Activated CD4-positive, alpha-beta T cell treated with anti-CD3 and anti-CD28 coated beads, Interleukin-2, amount 10 ng/mL, durations not matched to agents 24 days and 14 days (primary cell): ENCODE measurements at regions of chr6 and their contacts with region 1.

Region 1: GRCh38 chr6:125779924-125780539 is 10.7 kb upstream of the NCOA7 start:
- DNase-seq: peak; percentile 95
- H3K4me3 Mint-ChIP-seq: no peak overlapping the region
- H3K27ac Mint-ChIP-seq: no peak overlapping the region
- H3K4me1 Mint-ChIP-seq: peaks cover 10% of the 10 kb centered on the region
- H3K27me3 Mint-ChIP-seq: peaks cover 25% of the 10 kb centered on the region

Region 2: GRCh38 chr6:125749173-125749864 is 30.7 kb before region 1 on chr6 and contains the start of gene HEY2:
- intact Hi-C with region 1: loop called (anchors 2 kb)
- DNase-seq: peak; percentile 96
- H3K4me3 Mint-ChIP-seq: peak within 1 kb of the TSS; percentile 85
- H3K27ac Mint-ChIP-seq: peak within 1 kb of the TSS; percentile 42
- H3K4me1 Mint-ChIP-seq: peaks cover 33% of the 10 kb centered on the region
- H3K27me3 Mint-ChIP-seq: peaks cover 77% of the 10 kb centered on the region
- total RNA-seq, gene HEY2: not detected in 2 replicates

Region 3: DNA sequence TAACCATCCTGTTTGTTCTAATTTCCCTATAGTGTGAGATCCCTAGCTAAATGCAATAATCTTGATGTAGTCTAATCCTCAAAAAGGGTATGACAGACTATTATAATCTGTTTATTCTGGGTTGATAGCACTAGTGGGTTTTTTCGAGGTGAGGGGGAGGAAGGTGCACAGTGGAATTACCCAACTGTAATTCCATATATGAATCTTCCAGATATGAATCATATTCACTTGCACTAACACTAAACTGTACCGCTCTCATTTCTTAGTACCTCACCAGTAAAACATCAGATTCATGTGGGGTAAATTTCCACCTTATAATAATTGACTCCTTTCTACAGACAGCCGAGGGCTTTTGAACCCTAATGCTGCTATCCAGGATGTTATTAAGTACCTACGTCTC is 27.3 kb after region 1 on chr6:
- intact Hi-C with region 1: loop called (anchors 1 kb)
- DNase-seq: peak; percentile 50
- H3K4me3 Mint-ChIP-seq: peak overlapping the region; percentile 46
- H3K27ac Mint-ChIP-seq: peak overlapping the region; percentile 79
- H3K4me1 Mint-ChIP-seq: peaks cover 63% of the 10 kb centered on the region
- H3K27me3 Mint-ChIP-seq: no peaks in the 10 kb centered on the region

Region 4: DNA sequence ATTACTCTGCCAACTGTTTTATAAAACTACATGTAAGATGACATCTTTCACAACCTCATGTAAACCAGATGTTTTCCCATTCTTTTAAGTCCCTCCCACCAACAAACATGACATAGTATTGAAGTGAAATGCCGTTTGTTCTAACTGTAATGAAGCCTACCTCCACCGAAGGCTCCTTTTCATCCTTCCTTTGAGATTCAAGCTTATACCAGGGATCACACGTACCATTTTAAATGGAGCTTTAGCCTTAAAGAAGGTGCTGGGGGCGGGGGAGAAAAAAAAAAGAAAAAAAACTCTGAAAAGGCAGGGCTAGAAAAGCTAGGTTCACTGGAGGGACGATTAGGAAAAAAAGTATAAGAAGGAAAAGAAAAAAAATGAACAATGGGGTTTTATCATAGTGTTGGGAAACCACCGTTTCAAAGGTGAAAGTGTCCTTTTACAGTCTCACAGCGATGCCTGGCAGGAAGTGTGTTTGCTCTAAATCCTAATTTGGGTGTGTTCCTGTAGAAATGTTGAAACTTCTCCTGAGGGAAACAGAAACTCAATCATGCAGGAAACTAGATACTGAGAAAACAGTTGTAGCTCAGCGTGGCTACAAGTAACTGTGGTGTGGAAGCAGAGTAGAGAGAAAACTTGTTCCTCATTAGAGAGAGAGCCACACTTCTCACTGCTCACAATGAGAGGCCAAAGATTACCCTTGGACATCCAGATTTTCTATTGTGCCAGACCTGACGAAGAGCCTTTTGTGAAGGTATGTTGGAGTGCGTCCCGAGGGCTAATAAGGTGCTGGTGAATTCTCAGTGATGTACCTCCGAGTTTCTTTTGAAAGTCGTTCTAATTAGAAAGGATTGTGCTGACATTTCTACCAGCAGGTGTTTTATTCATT is 138.9 kb after region 1 on chr6:
- intact Hi-C with region 1: loop called (anchors 1 kb)
- DNase-seq: peak; percentile 89
- H3K4me3 Mint-ChIP-seq: peak overlapping the region; percentile 88
- H3K27ac Mint-ChIP-seq: peak overlapping the region; percentile 94
- H3K4me1 Mint-ChIP-seq: peaks cover 51% of the 10 kb centered on the region
- H3K27me3 Mint-ChIP-seq: no peaks in the 10 kb centered on the region

Region 5: GRCh38 chr6:125974214-125974866 is 194.3 kb after region 1 on chr6:
- intact Hi-C with region 1: loop called (anchors 1 kb)
- DNase-seq: no peak
- H3K4me3 Mint-ChIP-seq: no peak overlapping the region
- H3K27ac Mint-ChIP-seq: no peak overlapping the region
- H3K4me1 Mint-ChIP-seq: peaks cover 3% of the 10 kb centered on the region
- H3K27me3 Mint-ChIP-seq: no peaks in the 10 kb centered on the region

Region 6: DNA sequence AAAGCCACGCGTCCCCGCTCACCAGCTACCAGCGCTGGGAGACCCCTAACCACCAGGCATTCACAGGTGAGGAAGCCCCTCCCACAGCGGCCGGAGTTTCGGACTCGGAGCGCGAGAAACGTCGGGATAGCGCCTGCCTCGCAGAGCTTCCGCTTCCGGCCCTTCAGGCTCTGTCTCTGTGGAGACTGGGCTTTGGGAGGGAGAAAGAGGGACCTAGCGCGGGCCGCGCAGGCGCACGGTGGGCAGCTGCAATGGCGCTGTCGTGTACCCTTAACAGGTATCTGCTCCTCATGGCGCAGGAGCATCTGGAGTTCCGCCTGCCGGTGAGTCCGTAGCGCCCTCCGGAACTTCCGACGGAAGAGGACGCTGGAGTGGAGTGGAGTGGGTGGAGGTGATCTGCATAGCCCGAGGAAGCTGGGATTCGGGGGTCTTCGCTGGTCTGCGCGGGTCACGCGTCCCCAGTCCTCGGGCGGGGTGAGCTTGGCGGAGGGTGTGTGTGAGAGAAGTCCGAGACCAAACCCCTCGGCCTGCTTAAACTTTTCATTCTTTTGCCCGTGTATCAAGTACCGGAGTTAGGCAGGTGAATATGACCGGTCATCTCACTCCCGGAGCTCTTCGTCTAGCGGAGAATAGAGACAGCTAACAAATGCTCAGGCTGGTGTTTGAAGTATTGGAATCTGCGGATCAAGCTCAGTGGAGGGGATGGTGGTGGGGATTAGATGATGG is 206.4 kb after region 1 on chr6 and contains the start of gene TRMT11:
- intact Hi-C with region 1: loop called (anchors 1 kb)
- DNase-seq: peak; percentile 93
- H3K4me3 Mint-ChIP-seq: peak within 1 kb of the TSS; percentile 8
- H3K27ac Mint-ChIP-seq: no peak within 1 kb of the TSS
- H3K4me1 Mint-ChIP-seq: peaks cover 7% of the 10 kb centered on the region
- H3K27me3 Mint-ChIP-seq: no peaks in the 10 kb centered on the region
- total RNA-seq, gene TRMT11: 33.6 and 34.4 TPM in 2 replicates

Region 7: DNA sequence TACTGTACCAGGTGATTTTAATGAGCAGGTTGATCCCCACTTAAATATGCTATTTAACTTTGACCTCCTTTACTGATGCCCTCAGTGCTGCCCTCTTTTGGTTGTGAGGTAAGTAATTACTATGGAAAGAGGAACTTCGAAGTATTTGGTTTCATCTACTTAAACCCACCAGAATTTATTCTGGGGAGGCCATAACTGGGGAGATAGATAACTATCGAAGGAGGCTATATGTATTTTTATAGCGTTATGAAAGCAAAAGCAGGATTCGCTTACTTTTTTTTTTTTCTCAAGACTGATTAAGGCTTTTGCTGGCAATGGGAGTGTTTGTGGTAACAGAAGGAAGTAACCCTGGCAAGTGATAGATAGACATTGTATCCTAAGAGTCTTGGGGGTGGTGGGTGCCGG is 390.9 kb after region 1 on chr6:
- intact Hi-C with region 1: no loop called
- DNase-seq: peak; percentile 71
- H3K4me3 Mint-ChIP-seq: peak overlapping the region; percentile 55
- H3K27ac Mint-ChIP-seq: no peak overlapping the region
- H3K4me1 Mint-ChIP-seq: peaks cover 2% of the 10 kb centered on the region
- H3K27me3 Mint-ChIP-seq: peaks cover 2% of the 10 kb centered on the region

Region 8: DNA sequence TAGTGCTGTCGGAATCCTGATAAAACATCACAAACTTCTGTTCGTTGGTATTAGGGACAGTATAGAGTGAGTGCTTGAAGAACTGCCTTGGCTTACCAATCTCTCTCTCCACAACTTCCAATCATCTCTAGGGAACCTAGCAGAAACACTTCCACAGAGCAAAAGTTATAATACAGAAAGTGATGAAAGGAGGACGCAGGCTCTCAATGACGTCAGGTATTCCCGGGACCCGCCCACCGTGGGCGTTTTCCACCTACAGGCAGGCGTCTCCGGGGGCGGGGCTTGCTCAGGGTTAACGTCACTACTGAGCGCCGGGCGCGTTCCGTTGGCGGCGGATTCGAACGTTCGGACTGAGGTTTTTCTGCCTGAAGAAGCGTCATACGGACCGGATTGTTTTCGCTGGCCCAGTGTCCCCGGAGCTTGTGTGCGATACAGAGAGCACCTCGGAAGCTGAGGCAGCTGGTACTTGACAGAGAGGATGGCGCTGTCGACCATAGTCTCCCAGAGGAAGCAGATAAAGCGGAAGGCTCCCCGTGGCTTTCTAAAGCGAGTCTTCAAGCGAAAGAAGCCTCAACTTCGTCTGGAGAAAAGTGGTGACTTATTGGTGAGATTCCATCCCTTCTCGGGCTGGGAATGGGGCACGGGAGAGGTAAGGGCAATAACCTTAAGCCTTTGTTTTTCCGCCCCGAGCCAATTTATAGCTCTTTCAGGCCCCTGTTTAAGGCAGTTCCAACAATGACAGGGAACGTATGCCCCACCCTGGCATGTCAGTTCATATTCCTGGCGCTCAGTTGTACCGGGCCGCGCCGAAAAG is 560.0 kb after region 1 on chr6 and contains the start of gene CENPW:
- intact Hi-C with region 1: loop called (anchors 2 kb)
- DNase-seq: peak; percentile 99
- H3K4me3 Mint-ChIP-seq: no peak within 1 kb of the TSS
- H3K27ac Mint-ChIP-seq: no peak within 1 kb of the TSS
- H3K4me1 Mint-ChIP-seq: peaks cover 26% of the 10 kb centered on the region
- H3K27me3 Mint-ChIP-seq: no peaks in the 10 kb centered on the region
- total RNA-seq, gene CENPW: 42.7 and 45.8 TPM in 2 replicates